ENCODE measurements at regions of chr6 and their contacts with region 1.

Region 1: GRCh38 chr6:37018198-37019064 is 13.0 kb downstream of the FGD2 start:
- DNase-seq: peak; percentile 78 to 90 (median 88)
- ATAC-seq: peak; percentile 94
- H3K4me3 ChIP-seq: no peak overlapping the region
- H3K4me3 Mint-ChIP-seq: no peak overlapping the region
- H3K27ac ChIP-seq: peak overlapping the region in 1 of 2 experiments; percentile 24
- H3K27ac Mint-ChIP-seq: peak overlapping the region; percentile 64
- H3K4me1 ChIP-seq: peaks cover 35% of the 10 kb centered on the region
- H3K4me1 Mint-ChIP-seq: peaks cover 41% of the 10 kb centered on the region
- H3K27me3 ChIP-seq: no peaks in the 10 kb centered on the region
- H3K27me3 Mint-ChIP-seq: no peaks in the 10 kb centered on the region
- CTCF ChIP-seq: peak; percentile 96

Region 2: GRCh38 chr6:36874443-36875249 is 143.8 kb before region 1 on chr6 and contains the start of gene PPIL1:
- CTCF ChIA-PET with region 1: interaction called, 24 read pairs
- POLR2A ChIA-PET with region 1: interaction called, 6 read pairs
- intact Hi-C with region 1: no loop called
- DNase-seq: peak; percentile 72 to 92 (median 85)
- ATAC-seq: peak; percentile 90
- H3K4me3 ChIP-seq: peak within 1 kb of the TSS; percentile 88 to 92
- H3K4me3 Mint-ChIP-seq: peak within 1 kb of the TSS; percentile 100
- H3K27ac ChIP-seq: peak within 1 kb of the TSS; percentile 82 to 87
- H3K27ac Mint-ChIP-seq: peak within 1 kb of the TSS; percentile 100
- H3K4me1 ChIP-seq: peaks cover 16% of the 10 kb centered on the region
- H3K4me1 Mint-ChIP-seq: peaks cover 48% of the 10 kb centered on the region
- H3K27me3 ChIP-seq: peaks cover 0 to 6% of the 10 kb centered on the region in 2 experiments
- H3K27me3 Mint-ChIP-seq: peaks cover 16% of the 10 kb centered on the region
- CTCF ChIP-seq: no peak
- total RNA-seq, gene PPIL1: 2.4 TPM

Region 3: DNA sequence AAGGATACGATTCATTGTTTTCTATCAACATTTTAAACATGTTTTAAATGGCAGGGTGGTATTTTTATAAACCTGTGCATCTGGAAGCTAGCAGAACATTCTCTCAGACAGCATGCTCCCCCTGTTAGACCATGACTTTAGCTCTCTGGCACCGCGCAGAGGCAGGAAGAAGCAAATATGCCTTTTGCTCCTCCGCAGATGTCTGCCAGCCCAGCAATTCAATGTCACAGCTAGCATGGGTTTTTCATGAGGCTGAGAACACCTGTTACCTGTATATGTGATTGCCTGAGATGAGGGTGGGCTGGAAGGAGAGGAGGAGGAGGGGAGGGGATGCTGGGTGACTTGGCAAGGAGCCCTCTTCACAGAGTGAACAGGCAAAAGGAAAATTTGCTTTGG is 39.1 kb before region 1 on chr6:
- CTCF ChIA-PET with region 1: interaction called, 20 read pairs
- POLR2A ChIA-PET with region 1: no interaction called
- intact Hi-C with region 1: loop called (anchors 5 kb)
- DNase-seq: peak in 4 of 9 experiments; percentile 33 to 66 (median 54)
- ATAC-seq: peak; percentile 78
- H3K4me3 ChIP-seq: no peak overlapping the region
- H3K4me3 Mint-ChIP-seq: no peak overlapping the region
- H3K27ac ChIP-seq: no peak overlapping the region
- H3K27ac Mint-ChIP-seq: peak overlapping the region; percentile 58
- H3K4me1 ChIP-seq: peaks cover 26% of the 10 kb centered on the region
- H3K4me1 Mint-ChIP-seq: peaks cover 25% of the 10 kb centered on the region
- H3K27me3 ChIP-seq: no peaks in the 10 kb centered on the region
- H3K27me3 Mint-ChIP-seq: no peaks in the 10 kb centered on the region
- CTCF ChIP-seq: peak; percentile 53

Region 4: DNA sequence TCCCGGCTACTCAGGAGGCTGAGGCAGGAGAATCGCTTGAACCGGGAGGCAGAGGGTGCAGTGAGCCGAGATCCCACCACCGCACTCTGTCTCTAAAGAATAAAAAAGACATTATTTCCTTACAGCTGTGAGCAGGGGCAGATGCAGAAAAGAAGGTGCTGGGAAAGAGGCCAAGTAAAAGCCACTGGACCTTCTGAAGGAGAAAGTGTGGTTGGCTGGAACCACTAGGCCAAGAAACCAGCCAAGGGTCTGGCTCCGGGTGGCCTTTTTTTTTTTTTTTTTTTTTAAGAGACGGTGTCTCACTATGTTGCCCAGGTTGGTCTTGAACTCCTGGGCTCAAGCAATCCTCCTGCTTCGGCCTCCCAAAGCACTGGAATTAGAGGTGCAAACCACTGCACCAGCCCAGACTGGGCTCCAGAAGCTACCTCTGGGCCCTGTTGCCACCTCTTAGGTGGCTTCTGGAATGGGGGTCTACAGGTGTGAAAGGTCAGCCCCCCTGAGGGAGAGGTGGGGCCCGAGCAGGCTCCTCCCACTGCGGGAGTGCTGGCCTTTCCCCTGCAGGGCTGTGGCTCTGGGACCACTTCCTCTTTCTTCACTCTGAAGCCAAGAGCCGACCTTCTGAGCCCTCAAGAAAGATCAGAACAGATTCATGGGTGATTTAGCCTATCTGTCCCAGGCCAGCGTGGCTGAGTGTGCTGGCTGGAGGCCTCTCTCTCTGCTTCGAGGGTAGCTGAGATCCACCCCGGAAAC is 13.2 kb before region 1 on chr6 and contains the start of gene FGD2:
- CTCF ChIA-PET with region 1: interaction called, 26 read pairs
- POLR2A ChIA-PET with region 1: no interaction called
- intact Hi-C with region 1: no loop called
- DNase-seq: peak in 1 of 9 experiments; percentile 35
- ATAC-seq: no peak
- H3K4me3 ChIP-seq: peak within 1 kb of the TSS in 1 of 2 experiments; percentile 12
- H3K4me3 Mint-ChIP-seq: peak within 1 kb of the TSS; percentile 54
- H3K27ac ChIP-seq: peak within 1 kb of the TSS in 1 of 2 experiments; percentile 12
- H3K27ac Mint-ChIP-seq: peak within 1 kb of the TSS; percentile 2
- H3K4me1 ChIP-seq: peaks cover 13% of the 10 kb centered on the region
- H3K4me1 Mint-ChIP-seq: peaks cover 15% of the 10 kb centered on the region
- H3K27me3 ChIP-seq: no peaks in the 10 kb centered on the region
- H3K27me3 Mint-ChIP-seq: no peaks in the 10 kb centered on the region
- CTCF ChIP-seq: no peak
- total RNA-seq, gene FGD2: 0.68 to 0.83 TPM

Region 5: GRCh38 chr6:37051138-37052026 is 33.0 kb after region 1 on chr6:
- CTCF ChIA-PET with region 1: interaction called, 281 read pairs
- POLR2A ChIA-PET with region 1: interaction called, 7 read pairs
- intact Hi-C with region 1: loop called (anchors 1 to 2 kb)
- DNase-seq: peak; percentile 83 to 94 (median 91)
- ATAC-seq: peak; percentile 71
- H3K4me3 ChIP-seq: peak overlapping the region in 1 of 2 experiments; percentile 44
- H3K4me3 Mint-ChIP-seq: peak overlapping the region; percentile 58
- H3K27ac ChIP-seq: peak overlapping the region; percentile 59 to 94
- H3K27ac Mint-ChIP-seq: peak overlapping the region; percentile 96
- H3K4me1 ChIP-seq: peaks cover 59% of the 10 kb centered on the region
- H3K4me1 Mint-ChIP-seq: peaks cover 58% of the 10 kb centered on the region
- H3K27me3 ChIP-seq: no peaks in the 10 kb centered on the region
- H3K27me3 Mint-ChIP-seq: no peaks in the 10 kb centered on the region
- CTCF ChIP-seq: peak; percentile 83

Region 6: GRCh38 chr6:37190159-37190535 is 171.7 kb after region 1 on chr6:
- CTCF ChIA-PET with region 1: interaction called, 22 read pairs
- POLR2A ChIA-PET with region 1: interaction called, 4 read pairs
- intact Hi-C with region 1: no loop called
- DNase-seq: no peak
- ATAC-seq: no peak
- H3K4me3 ChIP-seq: no peak overlapping the region
- H3K4me3 Mint-ChIP-seq: no peak overlapping the region
- H3K27ac ChIP-seq: no peak overlapping the region
- H3K27ac Mint-ChIP-seq: peak overlapping the region; percentile 32
- H3K4me1 ChIP-seq: peaks cover 59% of the 10 kb centered on the region
- H3K4me1 Mint-ChIP-seq: peaks cover 61% of the 10 kb centered on the region
- H3K27me3 ChIP-seq: no peaks in the 10 kb centered on the region
- H3K27me3 Mint-ChIP-seq: no peaks in the 10 kb centered on the region
- CTCF ChIP-seq: no peak

Region 7: GRCh38 chr6:37314487-37315156 is 296.2 kb after region 1 on chr6:
- CTCF ChIA-PET with region 1: interaction called, 7 read pairs
- POLR2A ChIA-PET with region 1: interaction called, 3 read pairs
- intact Hi-C with region 1: loop called (anchors 1 to 5 kb)
- DNase-seq: peak in 4 of 9 experiments; percentile 17 to 46 (median 35)
- ATAC-seq: no peak
- H3K4me3 ChIP-seq: no peak overlapping the region
- H3K4me3 Mint-ChIP-seq: no peak overlapping the region
- H3K27ac ChIP-seq: no peak overlapping the region
- H3K27ac Mint-ChIP-seq: no peak overlapping the region
- H3K4me1 ChIP-seq: no peaks in the 10 kb centered on the region
- H3K4me1 Mint-ChIP-seq: no peaks in the 10 kb centered on the region
- H3K27me3 ChIP-seq: no peaks in the 10 kb centered on the region
- H3K27me3 Mint-ChIP-seq: no peaks in the 10 kb centered on the region
- CTCF ChIP-seq: no peak